CD8-positive, alpha-beta T cell (primary cell): ENCODE measurements at regions of chr11 and their contacts with region 1.

Region 1: DNA sequence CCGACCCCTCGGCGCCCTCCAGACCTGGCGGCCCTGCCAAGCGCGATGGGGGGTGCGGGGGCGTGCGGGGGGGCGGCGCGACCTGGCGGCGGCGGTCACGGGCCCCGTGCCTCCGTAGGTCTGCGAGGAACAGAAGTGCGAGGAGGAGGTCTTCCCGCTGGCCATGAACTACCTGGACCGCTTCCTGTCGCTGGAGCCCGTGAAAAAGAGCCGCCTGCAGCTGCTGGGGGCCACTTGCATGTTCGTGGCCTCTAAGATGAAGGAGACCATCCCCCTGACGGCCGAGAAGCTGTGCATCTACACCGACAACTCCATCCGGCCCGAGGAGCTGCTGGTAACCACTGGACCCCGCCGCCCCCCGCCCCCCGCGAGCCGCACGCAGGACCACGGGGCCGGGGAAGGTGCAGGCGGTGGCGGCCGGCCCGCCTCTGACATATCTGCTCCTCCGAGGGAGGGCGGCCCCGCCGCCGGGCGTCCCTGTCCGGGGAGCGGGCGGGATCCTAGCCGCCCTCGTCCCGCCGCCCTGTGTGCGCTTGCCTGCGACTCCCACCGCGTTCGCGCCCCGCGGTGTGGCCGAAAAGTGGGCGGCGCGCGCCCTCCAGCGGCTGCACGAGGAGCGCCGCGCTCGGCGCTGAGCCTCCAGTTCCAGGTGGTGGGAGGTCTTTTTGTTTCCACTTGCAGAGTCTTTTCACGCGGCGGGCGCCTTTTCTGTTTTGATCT is 2.1 kb downstream of the CCND1 start:
- DNase-seq: peak; percentile 56 to 87 (median 73)
- ATAC-seq: peak; percentile 75
- H3K4me3 ChIP-seq: peak overlapping the region; percentile 61 to 65
- H3K4me3 Mint-ChIP-seq: peak overlapping the region; percentile 78
- H3K27ac ChIP-seq: no peak overlapping the region
- H3K27ac Mint-ChIP-seq: no peak overlapping the region
- H3K4me1 ChIP-seq: peaks cover 30% of the 10 kb centered on the region
- H3K4me1 Mint-ChIP-seq: peaks cover 23% of the 10 kb centered on the region
- H3K27me3 ChIP-seq: peaks cover 5 to 28% of the 10 kb centered on the region in 2 experiments
- H3K27me3 Mint-ChIP-seq: peaks cover 21% of the 10 kb centered on the region
- CTCF ChIP-seq: peak; percentile 97

Region 2: GRCh38 chr11:68584097-68584496 is 1059.0 kb before region 1 on chr11:
- CTCF ChIA-PET with region 1: no interaction called
- POLR2A ChIA-PET with region 1: no interaction called
- intact Hi-C with region 1: loop called in 1 of 2 experiments (anchors 10 kb)
- DNase-seq: peak; percentile 22 to 71 (median 58)
- ATAC-seq: peak; percentile 75
- H3K4me3 ChIP-seq: no peak overlapping the region
- H3K4me3 Mint-ChIP-seq: no peak overlapping the region
- H3K27ac ChIP-seq: no peak overlapping the region
- H3K27ac Mint-ChIP-seq: no peak overlapping the region
- H3K4me1 ChIP-seq: no peaks in the 10 kb centered on the region
- H3K4me1 Mint-ChIP-seq: peaks cover 5% of the 10 kb centered on the region
- H3K27me3 ChIP-seq: no peaks in the 10 kb centered on the region
- H3K27me3 Mint-ChIP-seq: no peaks in the 10 kb centered on the region
- CTCF ChIP-seq: peak; percentile 69

Region 3: DNA sequence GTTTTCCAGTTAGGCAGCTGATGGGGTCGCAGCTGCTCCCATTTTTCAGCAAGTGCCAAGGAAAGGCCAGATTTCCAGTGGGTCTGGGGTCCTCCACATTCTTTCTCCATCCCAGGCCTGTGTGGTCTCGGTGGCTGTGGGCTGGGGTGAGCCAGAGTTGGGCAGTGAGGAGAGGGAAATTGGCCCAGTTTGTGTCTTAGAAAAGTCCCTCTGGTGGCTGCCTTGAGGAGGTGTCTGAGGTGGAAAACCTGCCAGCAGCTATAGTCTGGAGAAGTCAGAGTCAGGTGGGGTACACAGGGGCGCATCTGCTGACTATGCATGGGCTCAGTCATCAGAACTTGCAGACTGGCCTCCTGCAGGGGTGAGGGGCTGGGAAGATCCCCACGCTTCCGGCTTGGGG is 692.8 kb before region 1 on chr11:
- CTCF ChIA-PET with region 1: no interaction called
- POLR2A ChIA-PET with region 1: no interaction called
- intact Hi-C with region 1: loop called in 1 of 2 experiments (anchors 5 kb)
- DNase-seq: no peak
- ATAC-seq: no peak
- H3K4me3 ChIP-seq: no peak overlapping the region
- H3K4me3 Mint-ChIP-seq: no peak overlapping the region
- H3K27ac ChIP-seq: no peak overlapping the region
- H3K27ac Mint-ChIP-seq: no peak overlapping the region
- H3K4me1 ChIP-seq: no peaks in the 10 kb centered on the region
- H3K4me1 Mint-ChIP-seq: peaks cover under 1% of the 10 kb centered on the region
- H3K27me3 ChIP-seq: no peaks in the 10 kb centered on the region
- H3K27me3 Mint-ChIP-seq: no peaks in the 10 kb centered on the region
- CTCF ChIP-seq: no peak

Region 4: GRCh38 chr11:69296890-69297786 is 345.9 kb before region 1 on chr11:
- CTCF ChIA-PET with region 1: interaction called, 96 read pairs
- POLR2A ChIA-PET with region 1: interaction called, 4 read pairs
- intact Hi-C with region 1: loop called in 1 of 2 experiments (anchors 1 kb)
- DNase-seq: peak; percentile 64 to 92 (median 83)
- ATAC-seq: peak; percentile 61
- H3K4me3 ChIP-seq: peak overlapping the region; percentile 21 to 37
- H3K4me3 Mint-ChIP-seq: peak overlapping the region; percentile 72
- H3K27ac ChIP-seq: peak overlapping the region in 1 of 2 experiments; percentile 46
- H3K27ac Mint-ChIP-seq: peak overlapping the region; percentile 86
- H3K4me1 ChIP-seq: peaks cover 37% of the 10 kb centered on the region
- H3K4me1 Mint-ChIP-seq: peaks cover 53% of the 10 kb centered on the region
- H3K27me3 ChIP-seq: no peaks in the 10 kb centered on the region
- H3K27me3 Mint-ChIP-seq: no peaks in the 10 kb centered on the region
- CTCF ChIP-seq: no peak

Region 5: DNA sequence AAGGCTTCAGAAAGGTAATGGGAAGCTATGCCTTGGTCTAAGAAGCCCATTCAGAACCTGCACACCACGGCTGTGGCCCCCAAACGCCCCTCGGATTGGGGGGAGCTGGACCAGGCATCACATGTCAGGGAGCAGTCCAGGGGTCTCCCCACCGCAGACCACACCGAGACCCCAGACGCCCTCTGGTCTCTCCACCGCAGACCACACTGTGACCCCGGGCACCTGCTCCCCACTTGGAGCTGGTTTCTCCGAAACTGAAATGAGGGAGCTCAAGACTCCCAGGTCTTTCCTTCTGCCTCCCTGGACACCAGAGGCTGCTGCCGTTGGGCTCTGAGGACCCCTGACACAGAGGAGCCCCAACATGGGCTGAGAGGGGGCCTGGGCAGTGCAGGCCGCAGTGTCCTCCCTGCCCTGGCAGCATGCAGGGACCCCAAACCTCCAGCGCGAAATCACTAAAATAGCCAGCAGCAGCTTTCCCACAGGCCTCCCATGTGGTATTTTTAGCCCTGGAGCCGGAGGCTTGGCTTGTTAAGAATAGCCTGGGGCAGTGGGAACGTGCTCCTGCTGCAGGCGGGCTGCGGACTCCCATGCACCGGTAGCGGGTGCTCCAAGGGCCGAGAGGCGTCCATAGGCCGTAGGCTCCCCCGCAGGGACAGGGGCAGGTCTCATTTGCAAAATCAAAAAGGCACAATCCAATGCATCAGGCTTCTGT is 153.9 kb before region 1 on chr11:
- CTCF ChIA-PET with region 1: no interaction called
- POLR2A ChIA-PET with region 1: no interaction called
- intact Hi-C with region 1: no loop called
- DNase-seq: peak in 1 of 9 experiments; percentile 13
- ATAC-seq: no peak
- H3K4me3 ChIP-seq: no peak overlapping the region
- H3K4me3 Mint-ChIP-seq: no peak overlapping the region
- H3K27ac ChIP-seq: no peak overlapping the region
- H3K27ac Mint-ChIP-seq: no peak overlapping the region
- H3K4me1 ChIP-seq: no peaks in the 10 kb centered on the region
- H3K4me1 Mint-ChIP-seq: no peaks in the 10 kb centered on the region
- H3K27me3 ChIP-seq: no peaks in the 10 kb centered on the region
- H3K27me3 Mint-ChIP-seq: peaks cover 14% of the 10 kb centered on the region
- CTCF ChIP-seq: no peak

Region 6: DNA sequence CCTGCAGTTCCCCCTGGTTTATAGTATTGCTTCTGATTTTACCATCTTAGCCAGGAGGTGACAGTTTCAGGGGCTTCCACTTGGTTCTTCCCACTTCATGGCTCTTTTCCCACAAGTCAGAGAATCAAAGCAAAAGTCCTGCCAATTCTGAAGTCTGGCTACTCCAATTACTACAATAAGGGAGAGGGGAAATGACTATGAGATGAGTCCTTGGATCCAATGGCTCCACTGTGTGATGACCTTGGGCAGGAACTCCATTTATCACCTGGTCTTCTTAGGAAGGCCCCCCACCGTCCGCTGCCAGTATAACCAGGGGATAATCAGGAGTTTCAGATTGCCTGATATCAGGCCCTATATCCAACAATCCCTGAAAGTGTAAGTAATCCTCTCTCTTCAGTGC is 33.7 kb before region 1 on chr11:
- CTCF ChIA-PET with region 1: no interaction called
- POLR2A ChIA-PET with region 1: no interaction called
- intact Hi-C with region 1: no loop called
- DNase-seq: no peak
- ATAC-seq: no peak
- H3K4me3 ChIP-seq: no peak overlapping the region
- H3K4me3 Mint-ChIP-seq: no peak overlapping the region
- H3K27ac ChIP-seq: no peak overlapping the region
- H3K27ac Mint-ChIP-seq: no peak overlapping the region
- H3K4me1 ChIP-seq: no peaks in the 10 kb centered on the region
- H3K4me1 Mint-ChIP-seq: no peaks in the 10 kb centered on the region
- H3K27me3 ChIP-seq: no peaks in the 10 kb centered on the region
- H3K27me3 Mint-ChIP-seq: peaks cover 19% of the 10 kb centered on the region
- CTCF ChIP-seq: no peak

Region 7: GRCh38 chr11:69670158-69670845 is 27.2 kb after region 1 on chr11:
- CTCF ChIA-PET with region 1: interaction called, 4 read pairs
- POLR2A ChIA-PET with region 1: no interaction called
- intact Hi-C with region 1: loop called (anchors 1 to 2 kb)
- DNase-seq: peak; percentile 27 to 74 (median 61)
- ATAC-seq: peak; percentile 21
- H3K4me3 ChIP-seq: no peak overlapping the region
- H3K4me3 Mint-ChIP-seq: no peak overlapping the region
- H3K27ac ChIP-seq: no peak overlapping the region
- H3K27ac Mint-ChIP-seq: peak overlapping the region; percentile 62
- H3K4me1 ChIP-seq: peaks cover 23% of the 10 kb centered on the region
- H3K4me1 Mint-ChIP-seq: peaks cover 31% of the 10 kb centered on the region
- H3K27me3 ChIP-seq: no peaks in the 10 kb centered on the region
- H3K27me3 Mint-ChIP-seq: no peaks in the 10 kb centered on the region
- CTCF ChIP-seq: peak; percentile 74

Region 8: DNA sequence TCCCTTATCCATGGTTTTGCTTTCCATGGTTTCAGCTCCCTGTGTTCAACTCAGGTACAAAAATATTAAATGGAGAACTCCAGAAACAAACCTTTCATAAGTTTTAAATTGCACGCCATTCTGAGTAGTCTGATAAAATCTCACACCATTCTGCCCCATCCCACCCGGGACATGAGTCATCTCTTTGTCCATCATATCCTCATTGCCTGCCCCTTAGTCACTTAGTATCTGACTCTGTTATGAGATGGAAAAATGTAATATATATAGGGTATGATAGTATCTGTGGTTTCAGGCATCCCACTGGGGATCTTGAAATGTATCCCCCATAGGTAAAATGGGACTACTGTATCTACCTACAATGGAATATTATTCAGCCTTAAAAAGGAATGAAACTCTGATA is 211.6 kb after region 1 on chr11:
- CTCF ChIA-PET with region 1: no interaction called
- POLR2A ChIA-PET with region 1: no interaction called
- intact Hi-C with region 1: no loop called
- DNase-seq: no peak
- ATAC-seq: no peak
- H3K4me3 ChIP-seq: no peak overlapping the region
- H3K4me3 Mint-ChIP-seq: no peak overlapping the region
- H3K27ac ChIP-seq: no peak overlapping the region
- H3K27ac Mint-ChIP-seq: no peak overlapping the region
- H3K4me1 ChIP-seq: no peaks in the 10 kb centered on the region
- H3K4me1 Mint-ChIP-seq: no peaks in the 10 kb centered on the region
- H3K27me3 ChIP-seq: no peaks in the 10 kb centered on the region
- H3K27me3 Mint-ChIP-seq: peaks cover 33% of the 10 kb centered on the region
- CTCF ChIP-seq: no peak

Region 9: DNA sequence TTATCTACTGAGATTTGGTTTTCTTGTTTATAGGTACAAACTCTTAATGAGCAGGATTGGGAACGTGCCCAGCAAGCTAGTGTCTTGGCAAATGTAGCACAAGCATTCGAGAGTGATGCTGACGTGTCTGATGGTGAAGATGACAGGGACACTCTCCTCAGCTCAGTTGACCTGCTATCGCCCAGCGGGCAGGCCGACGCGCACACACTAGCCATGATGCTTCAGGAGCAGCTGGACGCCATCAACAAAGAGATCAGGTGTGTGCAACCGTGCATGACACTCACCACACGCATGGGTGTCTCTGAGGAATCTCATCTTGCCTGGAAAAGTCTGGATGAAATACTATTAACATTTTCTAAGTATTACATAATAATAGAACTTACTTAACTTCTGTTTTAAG is 700.6 kb after region 1 on chr11:
- CTCF ChIA-PET with region 1: no interaction called
- POLR2A ChIA-PET with region 1: no interaction called
- intact Hi-C with region 1: no loop called
- DNase-seq: no peak
- ATAC-seq: no peak
- H3K4me3 ChIP-seq: no peak overlapping the region
- H3K4me3 Mint-ChIP-seq: no peak overlapping the region
- H3K27ac ChIP-seq: no peak overlapping the region
- H3K27ac Mint-ChIP-seq: no peak overlapping the region
- H3K4me1 ChIP-seq: no peaks in the 10 kb centered on the region
- H3K4me1 Mint-ChIP-seq: no peaks in the 10 kb centered on the region
- H3K27me3 ChIP-seq: no peaks in the 10 kb centered on the region
- H3K27me3 Mint-ChIP-seq: no peaks in the 10 kb centered on the region
- CTCF ChIP-seq: no peak